K562 (cell line): ENCODE measurements at regions of chr17 and their contacts with region 1.

Region 1: DNA sequence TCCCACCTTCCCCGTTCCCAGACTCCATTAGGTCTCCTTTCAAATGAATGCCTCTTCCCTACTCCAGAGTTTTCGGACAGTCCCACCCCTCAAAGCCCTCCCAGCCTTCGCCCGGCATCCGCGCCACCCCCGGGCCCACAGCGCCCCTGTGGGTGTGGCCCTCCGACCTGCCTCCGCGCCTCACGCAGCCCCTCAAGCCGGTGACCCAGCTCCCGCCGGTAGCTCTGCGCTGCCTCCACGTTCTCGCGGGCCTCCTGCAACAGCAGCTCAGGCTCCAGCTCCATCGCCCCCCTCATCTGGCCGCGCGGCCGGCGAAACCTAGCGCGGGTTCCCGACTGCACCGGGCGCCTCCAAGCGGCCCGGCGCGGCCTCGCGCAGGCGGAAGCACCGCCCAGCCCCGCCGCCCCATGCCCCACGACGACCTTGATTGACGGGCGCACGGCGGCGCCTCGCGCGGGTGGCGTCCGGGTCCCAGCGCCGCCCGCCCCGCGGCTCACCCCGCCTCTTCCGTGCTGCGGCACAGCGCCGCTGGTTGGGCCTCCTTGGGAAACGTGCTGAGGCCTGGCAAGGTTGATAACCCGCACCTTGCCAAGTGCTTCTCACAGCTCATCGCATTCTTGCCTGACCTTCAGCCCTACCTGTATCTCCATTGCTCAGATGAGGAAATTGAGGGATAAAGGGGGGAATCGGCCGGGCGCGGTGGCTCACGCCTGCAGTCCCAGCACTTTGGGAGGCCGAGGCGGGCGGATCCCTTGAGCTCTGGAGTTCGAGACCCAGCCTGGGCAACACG is at the start of gene CRLF3:
- DNase-seq: peak; percentile 93 to 96 (median 94)
- ATAC-seq: peak; percentile 93
- H3K4me3 ChIP-seq: peak within 1 kb of the TSS; percentile 99
- H3K27ac ChIP-seq: peak within 1 kb of the TSS; percentile 89
- H3K4me1 ChIP-seq: peaks cover 23 to 28% of the 10 kb centered on the region in 2 experiments
- H3K27me3 ChIP-seq: no peaks in the 10 kb centered on the region
- CTCF ChIP-seq: peak; percentile 30 to 72 (median 52); a peak in 5 of 6 replicates
- EP300 ChIP-seq: no peak
- POLR2A ChIP-seq: peak; percentile 90
- RAD21 ChIP-seq: peak in 1 of 2 experiments; percentile 16; a peak in 2 of 4 replicates
- polyA plus RNA-seq, gene CRLF3: 13.2 to 13.7 TPM

Region 2: GRCh38 chr17:30761058-30761457 is 63.5 kb before region 1 on chr17:
- CTCF ChIA-PET with region 1: no interaction called
- POLR2A ChIA-PET with region 1: no interaction called
- in situ Hi-C with region 1: no loop called
- intact Hi-C with region 1: no loop called
- DNase-seq: no peak
- ATAC-seq: no peak
- H3K4me3 ChIP-seq: no peak overlapping the region
- H3K27ac ChIP-seq: no peak overlapping the region
- H3K4me1 ChIP-seq: no peaks in the 10 kb centered on the region
- H3K27me3 ChIP-seq: no peaks in the 10 kb centered on the region
- CTCF ChIP-seq: no peak
- EP300 ChIP-seq: no peak
- POLR2A ChIP-seq: no peak
- RAD21 ChIP-seq: no peak

Region 3: GRCh38 chr17:30780343-30780742 is 44.2 kb before region 1 on chr17:
- CTCF ChIA-PET with region 1: no interaction called
- POLR2A ChIA-PET with region 1: no interaction called
- in situ Hi-C with region 1: no loop called
- intact Hi-C with region 1: no loop called
- DNase-seq: no peak
- ATAC-seq: no peak
- H3K4me3 ChIP-seq: no peak overlapping the region
- H3K27ac ChIP-seq: no peak overlapping the region
- H3K4me1 ChIP-seq: no peaks in the 10 kb centered on the region
- H3K27me3 ChIP-seq: no peaks in the 10 kb centered on the region
- CTCF ChIP-seq: no peak
- EP300 ChIP-seq: no peak
- POLR2A ChIP-seq: 0 out of 2 replicates have a peak, but pooled peaks have one; percentile 32
- RAD21 ChIP-seq: no peak

Region 4: GRCh38 chr17:30808785-30809286 is 15.7 kb before region 1 on chr17:
- CTCF ChIA-PET with region 1: interaction called, 3 read pairs
- POLR2A ChIA-PET with region 1: interaction called, 18 read pairs
- in situ Hi-C with region 1: no loop called
- intact Hi-C with region 1: no loop called
- DNase-seq: no peak
- ATAC-seq: no peak
- H3K4me3 ChIP-seq: no peak overlapping the region
- H3K27ac ChIP-seq: no peak overlapping the region
- H3K4me1 ChIP-seq: no peaks in the 10 kb centered on the region
- H3K27me3 ChIP-seq: no peaks in the 10 kb centered on the region
- CTCF ChIP-seq: no peak
- EP300 ChIP-seq: no peak
- POLR2A ChIP-seq: no peak
- RAD21 ChIP-seq: no peak

Region 5: GRCh38 chr17:30869005-30869404 is 44.5 kb after region 1 on chr17:
- CTCF ChIA-PET with region 1: no interaction called
- POLR2A ChIA-PET with region 1: no interaction called
- in situ Hi-C with region 1: no loop called
- intact Hi-C with region 1: no loop called
- DNase-seq: no peak
- ATAC-seq: no peak
- H3K4me3 ChIP-seq: no peak overlapping the region
- H3K27ac ChIP-seq: no peak overlapping the region
- H3K4me1 ChIP-seq: no peaks in the 10 kb centered on the region
- H3K27me3 ChIP-seq: no peaks in the 10 kb centered on the region
- CTCF ChIP-seq: no peak
- EP300 ChIP-seq: no peak
- POLR2A ChIP-seq: no peak
- RAD21 ChIP-seq: no peak

Region 6: GRCh38 chr17:31339906-31340661 is 515.5 kb after region 1 on chr17:
- CTCF ChIA-PET with region 1: no interaction called
- POLR2A ChIA-PET with region 1: no interaction called
- in situ Hi-C with region 1: no loop called
- intact Hi-C with region 1: loop called (anchors 10 kb)
- DNase-seq: peak; percentile 37 to 85 (median 55)
- ATAC-seq: peak; percentile 94
- H3K4me3 ChIP-seq: no peak overlapping the region
- H3K27ac ChIP-seq: peak overlapping the region; percentile 23; the same call in 2 of the 3 replicates
- H3K4me1 ChIP-seq: peaks cover 0 to 12% of the 10 kb centered on the region in 2 experiments; a peak in 3 of 5 replicates
- H3K27me3 ChIP-seq: no peaks in the 10 kb centered on the region
- CTCF ChIP-seq: no peak
- EP300 ChIP-seq: peak; percentile 84
- POLR2A ChIP-seq: no peak
- RAD21 ChIP-seq: peak; percentile 9 to 10; a peak in 1 of 4 replicates